Heart right ventricle (tissue), 16 donors: ENCODE measurements at regions of chr17 and their contacts with region 1.

Region 1: DNA sequence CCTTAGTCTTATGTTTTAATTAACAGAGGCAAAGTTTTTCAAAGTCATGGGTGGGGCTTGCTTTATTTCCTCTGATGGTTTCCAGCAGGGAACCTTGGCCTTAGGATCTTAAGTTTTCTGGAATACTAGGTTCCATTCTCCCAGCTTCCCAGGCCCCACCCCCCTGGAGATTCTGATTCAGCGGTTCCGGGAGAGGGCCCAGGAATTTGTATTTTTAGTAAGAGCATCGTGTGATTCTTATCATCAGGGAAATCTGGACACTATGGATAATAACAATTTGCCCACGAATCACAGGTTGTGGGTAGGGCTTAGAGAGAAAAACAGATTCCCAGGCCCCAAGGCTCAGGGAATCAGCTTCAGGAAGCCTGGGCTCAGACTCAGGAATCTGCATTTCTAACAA is 263.6 kb downstream of the NTN1 start:
- DNase-seq: peak in 1 of 2 donors; percentile 62
- ATAC-seq: peak; percentile 23 to 92 (median 77)
- H3K4me3 ChIP-seq: no peak overlapping the region
- H3K27ac ChIP-seq: peak overlapping the region in 4 of 10 donors; percentile 25 to 69 (median 50)
- H3K4me1 ChIP-seq: peaks cover 0 to 27% (median 9%) of the 10 kb centered on the region in 9 donors
- H3K27me3 ChIP-seq: no peaks in the 10 kb centered on the region
- CTCF ChIP-seq: no peak

Region 2: GRCh38 chr17:8991514-8992285 is 293.2 kb before region 1 on chr17:
- intact Hi-C with region 1: loop called in 6 of 10 experiments (anchors 5 to 10 kb)
- DNase-seq: peak; percentile 25 to 69
- ATAC-seq: peak in 7 of 8 donors; percentile 46 to 75 (median 69)
- H3K4me3 ChIP-seq: no peak overlapping the region
- H3K27ac ChIP-seq: no peak overlapping the region
- H3K4me1 ChIP-seq: no peaks in the 10 kb centered on the region
- H3K27me3 ChIP-seq: peaks cover 0 to 19% (median 3%) of the 10 kb centered on the region in 7 donors
- CTCF ChIP-seq: peak; percentile 52 to 87 (median 79)

Region 3: GRCh38 chr17:8997994-8998628 is 286.8 kb before region 1 on chr17:
- intact Hi-C with region 1: loop called in 7 of 10 experiments (anchors 5 to 10 kb)
- DNase-seq: peak in 1 of 2 donors; percentile 62
- ATAC-seq: peak in 5 of 8 donors; percentile 52 to 65 (median 59)
- H3K4me3 ChIP-seq: no peak overlapping the region
- H3K27ac ChIP-seq: no peak overlapping the region
- H3K4me1 ChIP-seq: peaks cover 0 to 10% (median 5%) of the 10 kb centered on the region in 9 donors
- H3K27me3 ChIP-seq: peaks cover 0 to 47% (median 16%) of the 10 kb centered on the region in 7 donors
- CTCF ChIP-seq: peak; percentile 62 to 97 (median 78)

Region 4: DNA sequence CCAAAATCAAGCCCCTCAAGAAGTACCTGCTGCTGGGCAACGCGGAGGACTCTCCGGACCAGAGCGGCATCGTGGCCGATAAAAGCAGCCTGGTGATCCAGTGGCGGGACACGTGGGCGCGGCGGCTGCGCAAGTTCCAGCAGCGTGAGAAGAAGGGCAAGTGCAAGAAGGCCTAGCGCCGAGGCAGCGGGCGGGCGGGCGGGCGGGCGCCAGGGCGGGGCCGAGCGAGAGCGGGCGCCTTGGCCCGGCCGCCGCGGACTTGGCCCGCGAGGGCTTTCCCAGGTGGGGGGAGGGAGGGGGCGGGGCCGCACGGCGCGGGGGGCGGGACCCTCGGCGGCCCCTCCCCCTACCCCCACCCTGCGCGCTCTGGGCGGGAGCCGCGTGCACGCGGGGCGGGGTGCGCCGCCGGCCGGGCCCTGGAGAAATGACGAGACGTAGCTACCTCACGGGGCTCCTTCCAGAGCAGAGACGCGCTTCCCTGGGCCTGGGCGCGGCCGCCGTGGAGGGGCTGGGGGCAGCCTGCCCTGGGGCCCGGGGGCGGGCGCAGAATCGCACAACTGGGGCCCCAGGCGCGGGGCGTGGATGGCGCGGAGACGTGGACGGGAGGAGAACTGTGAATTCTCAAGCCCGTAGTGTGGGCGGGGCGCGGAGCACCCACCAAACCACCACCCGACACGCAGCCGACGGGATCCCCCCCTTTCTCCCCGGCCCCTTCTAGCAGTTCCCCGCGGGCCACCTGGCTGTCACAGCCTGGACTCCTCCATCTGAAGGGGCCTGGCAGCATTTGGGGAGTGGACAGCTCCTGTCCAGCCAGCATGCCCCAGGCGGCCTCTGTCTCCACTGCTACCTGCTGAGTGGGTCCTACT is 44.9 kb before region 1 on chr17:
- intact Hi-C with region 1: loop called in 2 of 10 experiments (anchors 5 kb)
- DNase-seq: peak; percentile 78 to 82
- ATAC-seq: peak; percentile 67 to 88 (median 80)
- H3K4me3 ChIP-seq: peak overlapping the region; percentile 25 to 83 (median 61)
- H3K27ac ChIP-seq: peak overlapping the region; percentile 94 to 100 (median 98)
- H3K4me1 ChIP-seq: peaks cover 12 to 51% (median 40%) of the 10 kb centered on the region in 9 donors
- H3K27me3 ChIP-seq: no peaks in the 10 kb centered on the region
- CTCF ChIP-seq: peak in 1 of 9 donors; percentile 5

Region 5: GRCh38 chr17:9324864-9325263 is 40.0 kb after region 1 on chr17:
- intact Hi-C with region 1: no loop called
- DNase-seq: no peak
- ATAC-seq: no peak
- H3K4me3 ChIP-seq: no peak overlapping the region
- H3K27ac ChIP-seq: no peak overlapping the region
- H3K4me1 ChIP-seq: no peaks in the 10 kb centered on the region
- H3K27me3 ChIP-seq: no peaks in the 10 kb centered on the region
- CTCF ChIP-seq: no peak

Region 6: GRCh38 chr17:9522074-9522473 is 237.2 kb after region 1 on chr17:
- intact Hi-C with region 1: loop called in 4 of 10 experiments (anchors 10 kb)
- DNase-seq: peak in 1 of 2 donors; percentile 23
- ATAC-seq: peak in 6 of 8 donors; percentile 64 to 76 (median 72)
- H3K4me3 ChIP-seq: no peak overlapping the region
- H3K27ac ChIP-seq: no peak overlapping the region
- H3K4me1 ChIP-seq: peaks cover 0 to 22% (median 6%) of the 10 kb centered on the region in 9 donors
- H3K27me3 ChIP-seq: no peaks in the 10 kb centered on the region
- CTCF ChIP-seq: peak in 7 of 9 donors; percentile 35 to 68 (median 62)

Region 7: DNA sequence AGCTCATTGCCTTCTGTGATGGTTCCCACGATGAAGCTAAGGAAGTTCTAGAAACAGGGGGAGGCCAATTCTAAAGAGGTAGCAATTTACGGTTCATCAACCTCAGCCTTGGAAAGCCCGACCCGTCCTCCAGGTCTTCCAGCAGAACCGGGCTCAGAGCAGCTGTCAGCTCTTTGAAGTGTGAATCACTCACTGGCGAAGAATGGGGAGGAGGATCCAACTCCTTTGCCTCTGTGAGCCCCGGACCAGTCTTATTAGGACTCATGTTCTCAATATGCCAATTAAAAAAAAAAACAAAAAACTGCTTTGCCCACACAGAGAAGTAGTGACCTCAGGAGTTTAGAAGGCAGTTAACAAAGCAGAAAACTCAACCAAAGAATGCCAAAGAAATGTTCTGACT is 259.3 kb after region 1 on chr17:
- intact Hi-C with region 1: no loop called
- DNase-seq: no peak
- ATAC-seq: peak in 4 of 8 donors; percentile 38 to 74 (median 60)
- H3K4me3 ChIP-seq: no peak overlapping the region
- H3K27ac ChIP-seq: no peak overlapping the region
- H3K4me1 ChIP-seq: no peaks in the 10 kb centered on the region
- H3K27me3 ChIP-seq: no peaks in the 10 kb centered on the region
- CTCF ChIP-seq: no peak